Panc1 (cell line): ENCODE measurements at regions of chr1 and their contacts with region 1.

Region 1: DNA sequence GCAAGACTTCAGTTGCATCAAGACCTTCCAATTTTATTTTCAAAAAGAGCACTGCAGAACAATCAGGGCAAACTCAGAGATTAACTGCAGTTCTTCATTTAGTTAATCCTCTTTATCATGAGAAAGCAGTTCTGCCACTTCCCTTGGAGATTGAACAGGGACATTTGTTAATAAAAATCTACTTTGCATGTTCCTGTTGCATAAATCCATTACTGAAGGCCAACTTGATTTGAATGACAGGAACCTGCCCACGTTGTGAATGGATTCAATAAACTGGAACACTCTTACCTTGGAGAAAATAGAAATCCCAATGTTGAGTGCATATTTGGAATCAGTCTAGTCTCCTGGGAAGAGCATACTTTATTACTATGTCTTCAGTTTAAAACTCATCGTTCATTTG is 19.6 kb upstream of the PLD5 start:
- DNase-seq: no peak
- ATAC-seq: no peak
- H3K4me3 ChIP-seq: no peak overlapping the region
- H3K27ac ChIP-seq: no peak overlapping the region
- H3K4me1 ChIP-seq: no peaks in the 10 kb centered on the region
- H3K27me3 ChIP-seq: no peaks in the 10 kb centered on the region
- CTCF ChIP-seq: no peak

Region 2: DNA sequence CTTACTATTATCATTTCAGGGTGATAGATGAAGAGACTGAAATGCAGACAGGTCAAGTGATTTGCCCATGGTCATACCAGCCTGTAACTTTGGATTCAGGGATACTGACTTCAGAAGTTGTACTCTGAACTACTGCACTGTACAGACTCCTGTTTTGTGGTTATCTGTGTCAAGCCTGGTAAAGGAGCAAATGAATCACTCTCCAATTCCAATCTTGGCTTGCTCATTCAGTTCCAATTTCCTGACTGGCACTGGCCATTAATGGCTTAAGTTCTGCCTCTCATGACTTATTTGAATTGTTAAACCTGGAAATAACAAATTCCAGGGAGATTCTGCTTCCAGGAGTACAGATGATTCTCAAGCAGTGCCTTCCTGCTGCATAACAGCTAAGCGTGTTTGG is 25.8 kb after region 1 on chr1:
- CTCF ChIA-PET with region 1: no interaction called
- POLR2A ChIA-PET with region 1: no interaction called
- in situ Hi-C with region 1: no loop called
- intact Hi-C with region 1: loop called (anchors 1 kb)
- DNase-seq: no peak
- ATAC-seq: no peak
- H3K4me3 ChIP-seq: no peak overlapping the region
- H3K27ac ChIP-seq: no peak overlapping the region
- H3K4me1 ChIP-seq: no peaks in the 10 kb centered on the region
- H3K27me3 ChIP-seq: no peaks in the 10 kb centered on the region
- CTCF ChIP-seq: no peak